ENCODE measurements at regions of chr14 and their contacts with region 1.

Region 1: DNA sequence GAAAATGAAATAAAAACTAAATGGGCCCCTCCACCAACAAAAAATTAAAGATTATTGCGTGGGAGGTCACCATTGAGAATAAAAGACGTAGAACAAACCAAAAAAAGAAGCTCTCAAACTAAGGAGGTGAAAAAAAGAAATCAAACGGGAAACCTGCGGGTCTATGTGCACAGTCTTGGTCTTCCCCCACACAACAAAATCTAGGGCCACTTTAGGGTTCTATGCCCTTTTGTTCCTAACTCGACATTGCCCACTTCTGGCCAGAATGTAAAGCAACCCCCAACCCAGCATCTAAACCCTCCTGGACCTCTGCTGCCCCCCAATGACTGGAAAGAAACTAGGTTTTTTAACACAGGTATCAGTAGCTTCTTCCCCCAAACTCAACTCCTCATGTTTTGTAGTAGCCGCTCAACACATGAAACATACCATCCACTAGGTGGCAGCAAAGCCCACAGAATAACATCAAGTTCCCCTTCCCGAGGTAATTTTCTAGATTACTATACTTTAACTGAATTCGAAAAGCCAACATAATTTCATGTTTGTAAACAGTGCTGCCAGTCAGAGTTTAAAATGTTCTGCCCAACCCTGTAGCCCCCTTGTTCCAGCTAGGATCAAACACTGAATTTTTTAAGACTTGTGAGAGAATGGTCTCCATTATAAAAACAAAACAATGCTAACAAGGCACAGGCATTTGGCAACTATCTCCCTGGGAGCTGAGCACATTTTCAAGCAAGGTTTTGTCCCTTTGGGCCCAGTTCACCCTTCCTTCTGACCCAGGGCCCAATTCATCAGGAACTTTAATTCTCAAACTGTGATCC is 18.7 kb downstream of the DAD1 start:
- DNase-seq: peak in 8 of 9 donors; percentile 72 to 98 (median 96)
- ATAC-seq: peak; percentile 98
- H3K4me3 ChIP-seq: peak overlapping the region; percentile 53
- H3K4me3 Mint-ChIP-seq: peak overlapping the region; percentile 68 to 95 (median 80)
- H3K27ac ChIP-seq: peak overlapping the region; percentile 87
- H3K27ac Mint-ChIP-seq: peak overlapping the region; percentile 77 to 99 (median 96)
- H3K4me1 ChIP-seq: peaks cover 49 to 51% of the 10 kb centered on the region in 2 donors
- H3K4me1 Mint-ChIP-seq: peaks cover 28 to 72% (median 68%) of the 10 kb centered on the region in 7 donors
- H3K27me3 ChIP-seq: no peaks in the 10 kb centered on the region
- H3K27me3 Mint-ChIP-seq: no peaks in the 10 kb centered on the region

Region 2: GRCh38 chr14:21840765-21841164 is 729.6 kb before region 1 on chr14:
- CTCF ChIA-PET with region 1: interaction called, 14 read pairs
- POLR2A ChIA-PET with region 1: no interaction called
- intact Hi-C with region 1: no loop called
- DNase-seq: peak in 6 of 9 donors; percentile 21 to 50 (median 33)
- ATAC-seq: peak; percentile 76
- H3K4me3 ChIP-seq: no peak overlapping the region
- H3K4me3 Mint-ChIP-seq: peak overlapping the region; percentile 41 to 83 (median 66)
- H3K27ac ChIP-seq: no peak overlapping the region
- H3K27ac Mint-ChIP-seq: peak overlapping the region in 8 of 9 donors; percentile 50 to 90 (median 78)
- H3K4me1 ChIP-seq: no peaks in the 10 kb centered on the region
- H3K4me1 Mint-ChIP-seq: peaks cover 0 to 10% (median 5%) of the 10 kb centered on the region in 7 donors
- H3K27me3 ChIP-seq: no peaks in the 10 kb centered on the region
- H3K27me3 Mint-ChIP-seq: peaks cover 5 to 41% (median 16%) of the 10 kb centered on the region in 5 donors

Region 3: GRCh38 chr14:21965042-21965441 is 605.3 kb before region 1 on chr14:
- CTCF ChIA-PET with region 1: interaction called, 5 read pairs
- POLR2A ChIA-PET with region 1: no interaction called
- intact Hi-C with region 1: loop called in 1 of 2 experiments (anchors 1 kb)
- DNase-seq: peak in 8 of 9 donors; percentile 21 to 72 (median 61)
- ATAC-seq: peak; percentile 88
- H3K4me3 ChIP-seq: no peak overlapping the region
- H3K4me3 Mint-ChIP-seq: peak overlapping the region; percentile 50 to 78 (median 70)
- H3K27ac ChIP-seq: no peak overlapping the region
- H3K27ac Mint-ChIP-seq: peak overlapping the region; percentile 12 to 90 (median 78)
- H3K4me1 ChIP-seq: no peaks in the 10 kb centered on the region
- H3K4me1 Mint-ChIP-seq: peaks cover 8 to 48% (median 33%) of the 10 kb centered on the region in 7 donors
- H3K27me3 ChIP-seq: no peaks in the 10 kb centered on the region
- H3K27me3 Mint-ChIP-seq: peaks cover 0 to 12% (median 0%) of the 10 kb centered on the region in 5 donors

Region 4: DNA sequence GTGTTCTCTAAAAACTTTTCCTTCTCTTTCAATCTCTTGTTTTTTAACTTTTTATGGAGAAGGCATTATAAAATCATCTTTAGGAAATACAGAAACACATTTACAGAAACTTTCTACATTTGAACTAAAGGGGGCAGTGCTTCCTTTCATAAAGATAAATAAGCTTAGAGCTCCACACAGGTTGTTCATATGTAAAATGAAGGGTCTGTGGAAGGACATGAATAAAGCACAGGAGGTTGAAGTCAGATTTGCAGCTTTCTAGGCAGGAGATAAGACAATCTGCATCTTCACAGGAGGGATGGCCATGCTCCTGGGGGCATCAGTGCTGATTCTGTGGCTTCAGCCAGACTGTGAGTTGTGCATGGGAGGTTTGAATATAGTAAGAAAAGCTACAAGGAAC is 407.3 kb before region 1 on chr14:
- CTCF ChIA-PET with region 1: no interaction called
- POLR2A ChIA-PET with region 1: no interaction called
- intact Hi-C with region 1: loop called in 1 of 2 experiments (anchors 1 kb)
- DNase-seq: peak in 4 of 9 donors; percentile 0 to 31 (median 23)
- ATAC-seq: peak; percentile 46
- H3K4me3 ChIP-seq: peak overlapping the region; percentile 20
- H3K4me3 Mint-ChIP-seq: peak overlapping the region; percentile 47 to 92 (median 88)
- H3K27ac ChIP-seq: no peak overlapping the region
- H3K27ac Mint-ChIP-seq: peak overlapping the region; percentile 29 to 91 (median 81)
- H3K4me1 ChIP-seq: no peaks in the 10 kb centered on the region
- H3K4me1 Mint-ChIP-seq: peaks cover 0 to 25% (median 20%) of the 10 kb centered on the region in 7 donors
- H3K27me3 ChIP-seq: no peaks in the 10 kb centered on the region
- H3K27me3 Mint-ChIP-seq: peaks cover 0 to 4% (median 0%) of the 10 kb centered on the region in 5 donors

Region 5: GRCh38 chr14:22556990-22557623 is 13.2 kb before region 1 on chr14:
- CTCF ChIA-PET with region 1: interaction called, 385 read pairs
- POLR2A ChIA-PET with region 1: interaction called, 223 read pairs
- intact Hi-C with region 1: loop called (anchors 1 kb)
- DNase-seq: peak; percentile 84 to 97 (median 93)
- ATAC-seq: peak; percentile 48
- H3K4me3 ChIP-seq: peak overlapping the region; percentile 65
- H3K4me3 Mint-ChIP-seq: peak overlapping the region; percentile 67 to 95 (median 88)
- H3K27ac ChIP-seq: peak overlapping the region; percentile 96
- H3K27ac Mint-ChIP-seq: peak overlapping the region; percentile 94 to 99 (median 99)
- H3K4me1 ChIP-seq: peaks cover 87 to 90% of the 10 kb centered on the region in 2 donors
- H3K4me1 Mint-ChIP-seq: peaks cover 62 to 95% (median 92%) of the 10 kb centered on the region in 7 donors
- H3K27me3 ChIP-seq: no peaks in the 10 kb centered on the region
- H3K27me3 Mint-ChIP-seq: peaks cover 0 to 4% (median 0%) of the 10 kb centered on the region in 5 donors

Region 6: GRCh38 chr14:22766456-22767322 is 196.3 kb after region 1 on chr14 and contains the start of gene OXA1L:
- CTCF ChIA-PET with region 1: interaction called, 7 read pairs
- POLR2A ChIA-PET with region 1: interaction called, 3 read pairs
- intact Hi-C with region 1: loop called in 1 of 2 experiments (anchors 1 kb)
- DNase-seq: peak; percentile 86 to 99 (median 96)
- ATAC-seq: peak; percentile 96
- H3K4me3 ChIP-seq: peak within 1 kb of the TSS; percentile 93
- H3K4me3 Mint-ChIP-seq: peak within 1 kb of the TSS; percentile 86 to 97 (median 90)
- H3K27ac ChIP-seq: peak within 1 kb of the TSS; percentile 86
- H3K27ac Mint-ChIP-seq: peak within 1 kb of the TSS; percentile 88 to 99 (median 97)
- H3K4me1 ChIP-seq: peaks cover 18 to 24% of the 10 kb centered on the region in 2 donors
- H3K4me1 Mint-ChIP-seq: peaks cover 21 to 43% (median 39%) of the 10 kb centered on the region in 7 donors
- H3K27me3 ChIP-seq: no peaks in the 10 kb centered on the region
- H3K27me3 Mint-ChIP-seq: no peaks in the 10 kb centered on the region
- total RNA-seq, gene OXA1L: 112 to 177 (median 144) TPM

Region 7: DNA sequence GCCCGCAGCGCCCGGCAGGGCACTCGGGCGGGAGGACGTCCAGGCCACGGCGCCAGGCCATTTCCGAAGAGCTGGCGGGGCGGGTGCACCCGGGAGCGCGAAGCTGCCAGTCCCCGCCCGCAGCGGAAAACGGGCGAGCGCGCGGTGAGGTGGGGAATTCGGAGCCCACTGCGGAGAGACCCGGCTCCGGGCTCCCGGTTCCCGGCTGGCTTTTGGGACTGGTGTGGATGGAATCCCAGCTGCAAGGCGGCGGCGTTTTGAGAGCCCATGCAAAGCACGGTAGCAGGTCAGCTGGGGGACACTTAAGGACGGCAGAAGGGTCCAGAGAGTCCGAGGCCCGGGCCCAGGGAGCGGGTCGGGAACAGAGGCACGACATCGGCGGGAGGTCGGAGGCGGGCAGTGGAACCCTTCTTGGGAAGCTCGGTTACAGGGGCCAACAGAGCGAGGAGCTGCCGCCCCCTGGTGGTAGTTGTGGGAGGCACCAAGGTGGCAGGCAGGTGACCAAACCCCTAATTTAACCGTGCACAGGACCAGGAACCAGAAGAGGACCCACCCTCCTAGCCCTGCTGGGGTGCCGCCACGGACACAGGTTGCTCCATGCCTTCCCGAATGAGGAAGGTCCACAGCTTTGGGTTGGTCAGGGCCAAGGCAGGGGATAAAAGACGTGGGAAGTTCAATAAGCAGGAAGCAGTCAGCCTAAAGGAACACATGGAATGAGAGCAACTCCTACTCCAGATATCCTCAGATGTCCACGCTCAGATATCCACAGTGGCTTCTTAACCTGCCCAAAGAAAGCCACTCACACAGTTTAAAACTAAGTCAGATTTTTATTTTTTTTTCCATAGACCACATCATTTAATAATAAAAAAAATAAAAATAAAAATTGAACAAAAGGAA is 487.7 kb after region 1 on chr14:
- CTCF ChIA-PET with region 1: interaction called, 4 read pairs
- POLR2A ChIA-PET with region 1: interaction called, 3 read pairs
- intact Hi-C with region 1: loop called (anchors 1 kb)
- DNase-seq: peak; percentile 71 to 89 (median 83)
- ATAC-seq: peak; percentile 81
- H3K4me3 ChIP-seq: peak overlapping the region; percentile 67
- H3K4me3 Mint-ChIP-seq: peak overlapping the region; percentile 78 to 91 (median 87)
- H3K27ac ChIP-seq: peak overlapping the region; percentile 49
- H3K27ac Mint-ChIP-seq: peak overlapping the region in 7 of 9 donors; percentile 23 to 85 (median 58)
- H3K4me1 ChIP-seq: peaks cover 7 to 9% of the 10 kb centered on the region in 2 donors
- H3K4me1 Mint-ChIP-seq: peaks cover 13 to 20% (median 17%) of the 10 kb centered on the region in 7 donors
- H3K27me3 ChIP-seq: no peaks in the 10 kb centered on the region
- H3K27me3 Mint-ChIP-seq: peaks cover 0 to 8% (median 0%) of the 10 kb centered on the region in 5 donors